ENCODE measurements at regions of chr11 and their contacts with region 1.

Region 1: GRCh38 chr11:3021125-3021524 is 29.0 kb upstream of the NAP1L4 start:
- DNase-seq: peak; percentile 88
- ATAC-seq: peak; percentile 98
- H3K4me3 ChIP-seq: no peak overlapping the region
- H3K27ac ChIP-seq: peak overlapping the region; percentile 50
- H3K4me1 ChIP-seq: peaks cover 22% of the 10 kb centered on the region
- H3K27me3 ChIP-seq: no peaks in the 10 kb centered on the region
- CTCF ChIP-seq: peak; percentile 90
- EP300 ChIP-seq: no peak
- POLR2A ChIP-seq: no peak
- RAD21 ChIP-seq: peak; percentile 70; the same call in 1 of the 2 replicates

Region 2: GRCh38 chr11:2975594-2975993 is 45.5 kb before region 1 on chr11:
- CTCF ChIA-PET with region 1: interaction called, 8 read pairs
- POLR2A ChIA-PET with region 1: no interaction called
- in situ Hi-C with region 1: loop called (anchors 5 kb)
- intact Hi-C with region 1: loop called (anchors 1 kb)
- DNase-seq: peak; percentile 50
- ATAC-seq: peak; percentile 95
- H3K4me3 ChIP-seq: no peak overlapping the region
- H3K27ac ChIP-seq: no peak overlapping the region
- H3K4me1 ChIP-seq: peaks cover 11% of the 10 kb centered on the region
- H3K27me3 ChIP-seq: no peaks in the 10 kb centered on the region
- CTCF ChIP-seq: peak; percentile 70
- EP300 ChIP-seq: no peak
- POLR2A ChIP-seq: no peak
- RAD21 ChIP-seq: no peak; the same call in 1 of the 2 replicates